Transverse colon (tissue), 4 donors: ENCODE measurements at regions of chr18 and their contacts with region 1.

Region 1: GRCh38 chr18:2571200-2572143 is at the starts of genes METTL4 and NDC80:
- DNase-seq: peak; percentile 89
- H3K4me3 ChIP-seq: peak within 1 kb of the TSS; percentile 41 to 74 (median 62)
- H3K27ac ChIP-seq: peak within 1 kb of the TSS; percentile 89 to 97 (median 92)
- H3K4me1 ChIP-seq: peaks cover 8 to 39% (median 15%) of the 10 kb centered on the region in 4 donors
- H3K27me3 ChIP-seq: no peaks in the 10 kb centered on the region
- CTCF ChIP-seq: no peak
- EP300 ChIP-seq: no peak
- POLR2A ChIP-seq: peak; percentile 70
- total RNA-seq, gene METTL4: 2.2 to 14.0 (median 5.4) TPM
- total RNA-seq, gene NDC80: 0.96 to 1.9 (median 1.6) TPM in 3 of 4 donors, not detected in the other

Region 2: GRCh38 chr18:864872-865273 is 1706.6 kb before region 1 on chr18:
- in situ Hi-C with region 1: loop called in 1 of 4 experiments (anchors 25 kb)
- intact Hi-C with region 1: no loop called
- DNase-seq: peak; percentile 60
- H3K4me3 ChIP-seq: no peak overlapping the region
- H3K27ac ChIP-seq: no peak overlapping the region
- H3K4me1 ChIP-seq: no peaks in the 10 kb centered on the region
- H3K27me3 ChIP-seq: peaks cover 39% of the 10 kb centered on the region
- CTCF ChIP-seq: peak; percentile 87 to 93 (median 90)
- EP300 ChIP-seq: no peak
- POLR2A ChIP-seq: no peak

Region 3: GRCh38 chr18:2354292-2354691 is 217.2 kb before region 1 on chr18:
- in situ Hi-C with region 1: no loop called
- intact Hi-C with region 1: no loop called
- DNase-seq: no peak
- H3K4me3 ChIP-seq: no peak overlapping the region
- H3K27ac ChIP-seq: no peak overlapping the region
- H3K4me1 ChIP-seq: no peaks in the 10 kb centered on the region
- H3K27me3 ChIP-seq: no peaks in the 10 kb centered on the region
- CTCF ChIP-seq: no peak
- EP300 ChIP-seq: no peak
- POLR2A ChIP-seq: no peak

Region 4: GRCh38 chr18:2655178-2655953 is 83.9 kb after region 1 on chr18 and contains the start of gene SMCHD1:
- in situ Hi-C with region 1: loop called in 2 of 4 experiments (anchors 10 kb)
- intact Hi-C with region 1: loop called (anchors 10 kb)
- DNase-seq: peak; percentile 90
- H3K4me3 ChIP-seq: peak within 1 kb of the TSS; percentile 60 to 90 (median 88)
- H3K27ac ChIP-seq: peak within 1 kb of the TSS; percentile 95 to 99 (median 98)
- H3K4me1 ChIP-seq: peaks cover 12 to 50% (median 32%) of the 10 kb centered on the region in 4 donors
- H3K27me3 ChIP-seq: no peaks in the 10 kb centered on the region
- CTCF ChIP-seq: no peak
- EP300 ChIP-seq: no peak
- POLR2A ChIP-seq: peak; percentile 87
- total RNA-seq, gene SMCHD1: 41.0 to 179 (median 136) TPM